Caco-2 (cell line): ENCODE measurements at regions of chr2 and their contacts with region 1.

Region 1: DNA sequence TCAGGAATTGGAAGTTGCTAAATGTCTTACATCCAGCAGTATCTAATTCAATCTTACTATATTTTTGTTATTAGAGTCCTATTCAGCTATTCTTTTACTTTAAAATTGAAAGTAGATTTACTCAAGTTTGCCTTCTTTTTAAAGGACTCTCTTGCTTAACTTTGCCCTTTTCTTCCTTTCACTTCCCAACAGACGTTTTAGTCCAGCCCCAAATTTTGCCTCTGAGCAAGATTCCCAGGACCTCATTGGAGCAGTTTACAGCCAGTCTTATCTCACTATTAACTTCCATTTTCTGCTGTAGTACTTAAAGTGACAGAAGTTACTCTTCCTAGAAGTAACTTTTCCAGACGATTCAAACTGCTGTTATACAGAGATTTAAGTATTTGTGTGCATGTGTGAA is 1.7 kb upstream of the PRKD3 start:
- DNase-seq: peak in 1 of 2 experiments; percentile 29
- H3K4me3 ChIP-seq: no peak overlapping the region
- H3K4me3 Mint-ChIP-seq: peak overlapping the region; percentile 48
- H3K27ac Mint-ChIP-seq: no peak overlapping the region
- H3K4me1 ChIP-seq: peaks cover 13% of the 10 kb centered on the region; the same call in 1 of the 2 replicates
- H3K4me1 Mint-ChIP-seq: peaks cover 19% of the 10 kb centered on the region
- H3K27me3 ChIP-seq: no peaks in the 10 kb centered on the region
- H3K27me3 Mint-ChIP-seq: no peaks in the 10 kb centered on the region
- CTCF ChIP-seq: no peak

Region 2: GRCh38 chr2:37343537-37344434 is 17.5 kb after region 1 on chr2:
- CTCF ChIA-PET with region 1: interaction called, 3 read pairs
- POLR2A ChIA-PET with region 1: no interaction called
- intact Hi-C with region 1: loop called (anchors 2 kb)
- DNase-seq: peak; percentile 40 to 50
- H3K4me3 ChIP-seq: peak overlapping the region; percentile 79
- H3K4me3 Mint-ChIP-seq: peak overlapping the region; percentile 75
- H3K27ac Mint-ChIP-seq: peak overlapping the region; percentile 25
- H3K4me1 ChIP-seq: peaks cover 16% of the 10 kb centered on the region
- H3K4me1 Mint-ChIP-seq: peaks cover 10% of the 10 kb centered on the region
- H3K27me3 ChIP-seq: no peaks in the 10 kb centered on the region
- H3K27me3 Mint-ChIP-seq: no peaks in the 10 kb centered on the region
- CTCF ChIP-seq: peak; percentile 32 to 35